ENCODE measurements at regions of chr4 and their contacts with region 1.

Region 1: DNA sequence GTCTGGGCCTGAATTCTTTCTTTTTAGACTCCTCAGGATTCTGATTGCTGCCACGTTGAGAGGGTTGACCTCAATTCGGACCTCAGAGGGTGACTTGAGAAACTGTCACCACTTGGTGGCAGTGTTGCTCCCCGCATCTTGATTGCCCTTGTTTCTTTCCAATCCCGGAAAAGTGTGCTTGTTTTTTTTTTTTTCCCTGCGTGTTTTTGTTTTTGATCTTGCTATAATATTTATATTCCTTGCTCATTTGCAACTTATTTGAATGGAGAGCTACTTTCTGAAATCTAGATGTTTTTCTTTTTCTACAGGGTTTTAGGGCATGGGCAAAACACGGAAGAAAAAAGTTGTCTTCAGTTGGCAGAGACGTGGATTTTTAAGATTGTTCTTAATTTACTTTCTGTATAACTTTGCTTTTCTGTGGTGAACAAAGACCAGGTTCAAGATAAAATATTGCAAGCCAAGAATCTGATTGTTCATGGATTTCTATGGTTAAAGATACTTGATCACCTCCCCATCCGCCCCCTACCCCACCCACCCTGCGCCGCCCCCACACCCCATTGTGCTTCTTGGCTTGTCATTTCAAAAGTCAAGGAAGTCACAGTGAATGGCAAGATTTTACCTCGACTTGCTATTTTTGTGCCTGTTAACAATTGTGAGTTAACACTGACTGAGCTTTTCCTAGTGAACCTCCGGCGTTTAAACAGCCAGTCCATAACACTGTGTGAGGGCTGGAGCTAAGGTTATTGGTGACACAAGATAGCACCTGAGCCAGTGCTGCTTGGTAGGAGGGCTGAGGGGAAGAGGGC is 102.1 kb downstream of the PTTG2 start:
- DNase-seq: no peak
- ATAC-seq: peak; percentile 93
- H3K4me3 ChIP-seq: no peak overlapping the region
- H3K27ac ChIP-seq: peak overlapping the region; percentile 6
- H3K4me1 ChIP-seq: peaks cover 3% of the 10 kb centered on the region; the same call in 1 of the 2 replicates
- H3K27me3 ChIP-seq: no peaks in the 10 kb centered on the region
- CTCF ChIP-seq: peak; percentile 67 to 85 (median 80)
- EP300 ChIP-seq: no peak
- POLR2A ChIP-seq: no peak
- RAD21 ChIP-seq: peak; percentile 95

Region 2: DNA sequence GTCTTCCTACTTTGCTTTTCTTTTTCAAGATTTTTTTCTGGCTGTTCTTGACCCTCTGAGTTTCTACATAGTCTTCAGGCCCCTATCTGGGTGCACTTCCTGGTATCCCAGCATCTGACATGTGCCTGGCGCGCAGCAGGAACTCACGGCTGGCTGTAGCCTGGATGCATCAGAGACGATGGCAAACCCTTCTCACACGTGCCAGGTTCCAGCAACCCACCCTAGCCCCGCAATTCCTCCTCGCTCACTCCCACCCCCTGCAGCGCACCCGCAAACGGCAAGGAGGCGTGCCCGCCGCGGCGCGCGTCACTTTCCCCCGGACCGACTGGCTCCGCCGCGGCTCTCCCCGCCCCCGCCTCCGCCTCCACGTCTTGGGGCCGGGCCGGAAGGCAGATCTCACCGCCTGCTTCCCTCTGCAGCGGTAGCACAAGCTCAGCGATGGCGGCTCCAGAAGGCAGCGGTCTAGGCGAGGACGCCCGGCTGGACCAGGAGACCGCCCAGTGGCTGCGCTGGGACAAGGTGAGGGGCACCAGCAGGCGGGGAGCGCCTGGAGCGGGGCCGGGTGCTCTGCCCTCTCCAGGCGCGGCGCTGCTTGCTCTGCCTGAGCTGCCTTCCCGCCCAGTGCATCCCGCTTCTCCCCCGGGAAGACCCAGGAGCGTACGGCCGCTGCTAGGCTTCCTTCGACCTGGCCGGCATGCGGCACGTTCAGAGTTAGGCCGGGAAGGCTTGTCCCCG is 235.8 kb before region 1 on chr4 and contains the start of gene PGM2:
- CTCF ChIA-PET with region 1: no interaction called
- POLR2A ChIA-PET with region 1: no interaction called
- RAD21 ChIA-PET with region 1: no interaction called
- SMC1A ChIA-PET with region 1: no interaction called
- in situ Hi-C with region 1: no loop called
- intact Hi-C with region 1: no loop called
- DNase-seq: peak; percentile 45
- ATAC-seq: peak; percentile 98
- H3K4me3 ChIP-seq: peak within 1 kb of the TSS; percentile 79
- H3K27ac ChIP-seq: peak within 1 kb of the TSS; percentile 66
- H3K4me1 ChIP-seq: 0 out of 2 replicates have a peak, but pooled peaks cover 5% of the 10 kb centered on the region
- H3K27me3 ChIP-seq: no peaks in the 10 kb centered on the region
- CTCF ChIP-seq: 0 out of 6 replicates have a peak, but pooled peaks of 1 of the 3 experiments have one; percentile 7
- EP300 ChIP-seq: no peak
- POLR2A ChIP-seq: peak; percentile 100
- RAD21 ChIP-seq: 0 out of 2 replicates have a peak, but pooled peaks have one; percentile 5
- polyA plus RNA-seq, gene PGM2: 11.9 to 15.1 TPM

Region 3: DNA sequence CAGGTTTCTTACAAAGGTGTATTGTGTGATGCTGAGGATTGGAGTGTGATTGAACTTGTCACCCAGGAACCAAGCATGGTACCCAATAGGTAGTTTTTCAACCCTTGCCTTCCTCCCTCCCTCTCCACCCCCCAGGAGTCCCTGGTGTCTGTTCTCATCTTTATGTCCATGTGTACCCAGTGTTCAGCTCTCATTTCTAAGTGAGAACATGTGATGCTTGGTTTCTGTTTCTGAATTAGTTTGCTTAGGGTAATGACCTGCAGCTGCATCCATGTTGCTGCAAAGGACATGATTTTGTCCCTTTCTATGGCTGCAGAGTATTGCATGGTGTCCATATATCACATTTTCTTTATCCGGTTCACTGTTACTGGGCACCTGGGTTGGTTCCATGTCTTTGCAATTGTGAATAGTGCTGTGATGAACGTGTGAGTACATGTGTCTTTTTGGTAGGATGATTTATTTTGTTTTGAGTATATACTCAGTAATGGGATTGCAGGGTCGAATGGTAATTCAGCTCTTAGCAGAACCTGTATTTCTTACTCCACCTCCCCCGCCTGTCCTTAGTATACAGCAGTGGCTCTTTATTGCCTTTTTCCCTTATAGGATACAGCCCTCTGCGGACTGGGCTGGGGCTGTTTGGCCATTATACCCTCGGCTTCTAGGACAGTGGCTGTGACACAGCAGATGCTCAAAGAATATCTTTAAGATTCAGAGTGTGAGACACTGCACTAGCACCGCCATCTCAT is 43.4 kb after region 1 on chr4:
- CTCF ChIA-PET with region 1: no interaction called
- POLR2A ChIA-PET with region 1: no interaction called
- RAD21 ChIA-PET with region 1: no interaction called
- SMC1A ChIA-PET with region 1: no interaction called
- in situ Hi-C with region 1: no loop called
- intact Hi-C with region 1: no loop called
- DNase-seq: peak; percentile 45
- ATAC-seq: peak; percentile 92
- H3K4me3 ChIP-seq: no peak overlapping the region
- H3K27ac ChIP-seq: peak overlapping the region; percentile 30
- H3K4me1 ChIP-seq: peaks cover 15% of the 10 kb centered on the region
- H3K27me3 ChIP-seq: no peaks in the 10 kb centered on the region
- CTCF ChIP-seq: no peak
- EP300 ChIP-seq: peak in 1 of 2 experiments; percentile 23; a peak in 1 of 4 replicates
- POLR2A ChIP-seq: no peak
- RAD21 ChIP-seq: peak; percentile 19; the same call in 1 of the 2 replicates

Region 4: DNA sequence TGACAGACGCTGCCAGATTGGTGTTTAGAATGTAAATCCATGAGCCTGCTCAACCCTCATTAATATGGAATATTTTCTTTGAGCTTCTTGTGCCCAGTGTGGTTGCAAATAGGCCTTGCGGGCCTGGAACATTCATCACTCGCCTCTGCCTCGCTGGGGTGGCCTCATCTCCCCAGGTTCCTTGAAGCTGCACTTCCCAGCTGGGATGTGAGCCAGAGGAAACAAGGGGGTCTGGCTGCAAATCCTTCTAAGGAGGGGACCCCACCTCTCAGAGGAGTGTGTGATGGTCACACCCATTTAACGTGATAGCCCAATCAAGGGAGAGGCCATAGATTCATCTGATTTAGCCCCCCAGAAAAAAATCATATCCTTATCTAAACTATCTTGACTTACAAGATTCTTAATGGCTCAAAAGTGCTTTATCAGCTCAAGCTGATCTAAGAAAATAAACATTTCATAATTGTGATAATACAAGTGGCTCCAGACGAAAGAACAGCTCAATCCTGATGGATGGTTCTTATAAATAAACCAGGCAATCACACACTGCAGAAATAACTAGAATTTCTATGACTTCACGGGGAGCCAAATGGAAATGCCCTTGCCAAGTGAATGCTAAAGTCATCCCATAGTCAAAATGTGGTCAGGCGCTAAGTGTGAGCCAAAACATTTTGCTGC is 87.8 kb after region 1 on chr4:
- CTCF ChIA-PET with region 1: no interaction called
- POLR2A ChIA-PET with region 1: no interaction called
- RAD21 ChIA-PET with region 1: no interaction called
- SMC1A ChIA-PET with region 1: no interaction called
- in situ Hi-C with region 1: no loop called
- intact Hi-C with region 1: no loop called
- DNase-seq: no peak
- ATAC-seq: no peak
- H3K4me3 ChIP-seq: no peak overlapping the region
- H3K27ac ChIP-seq: no peak overlapping the region
- H3K4me1 ChIP-seq: no peaks in the 10 kb centered on the region; the same call in 1 of the 2 replicates
- H3K27me3 ChIP-seq: no peaks in the 10 kb centered on the region
- CTCF ChIP-seq: no peak
- EP300 ChIP-seq: no peak
- POLR2A ChIP-seq: no peak
- RAD21 ChIP-seq: no peak

Region 5: DNA sequence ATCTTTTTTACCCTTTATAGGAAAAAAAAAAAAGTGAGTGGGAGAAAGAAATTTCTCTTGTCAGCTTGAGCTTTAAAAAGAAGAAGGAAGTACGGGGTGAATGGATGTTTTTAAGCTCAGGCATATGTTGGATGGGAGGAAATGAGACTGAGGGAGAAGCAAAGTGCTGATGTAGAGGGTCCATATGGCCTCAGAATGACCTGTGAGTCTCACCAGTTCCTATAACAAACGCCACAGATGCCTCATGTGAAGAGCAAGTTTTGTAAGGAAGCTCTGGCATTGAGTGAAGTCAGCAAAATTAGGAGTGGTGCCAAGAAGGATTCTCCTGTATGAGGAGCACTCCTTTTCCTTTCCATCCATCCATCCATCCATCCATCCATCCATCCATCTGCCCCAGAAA is 112.5 kb after region 1 on chr4:
- CTCF ChIA-PET with region 1: interaction called, 202 read pairs
- POLR2A ChIA-PET with region 1: interaction called, 3 read pairs
- RAD21 ChIA-PET with region 1: interaction called, 173 read pairs
- SMC1A ChIA-PET with region 1: interaction called, 40 read pairs
- in situ Hi-C with region 1: no loop called
- intact Hi-C with region 1: loop called (anchors 1 kb)
- DNase-seq: no peak
- ATAC-seq: no peak
- H3K4me3 ChIP-seq: no peak overlapping the region
- H3K27ac ChIP-seq: no peak overlapping the region
- H3K4me1 ChIP-seq: peaks cover 36% of the 10 kb centered on the region
- H3K27me3 ChIP-seq: no peaks in the 10 kb centered on the region
- CTCF ChIP-seq: no peak
- EP300 ChIP-seq: no peak
- POLR2A ChIP-seq: no peak
- RAD21 ChIP-seq: no peak

Region 6: DNA sequence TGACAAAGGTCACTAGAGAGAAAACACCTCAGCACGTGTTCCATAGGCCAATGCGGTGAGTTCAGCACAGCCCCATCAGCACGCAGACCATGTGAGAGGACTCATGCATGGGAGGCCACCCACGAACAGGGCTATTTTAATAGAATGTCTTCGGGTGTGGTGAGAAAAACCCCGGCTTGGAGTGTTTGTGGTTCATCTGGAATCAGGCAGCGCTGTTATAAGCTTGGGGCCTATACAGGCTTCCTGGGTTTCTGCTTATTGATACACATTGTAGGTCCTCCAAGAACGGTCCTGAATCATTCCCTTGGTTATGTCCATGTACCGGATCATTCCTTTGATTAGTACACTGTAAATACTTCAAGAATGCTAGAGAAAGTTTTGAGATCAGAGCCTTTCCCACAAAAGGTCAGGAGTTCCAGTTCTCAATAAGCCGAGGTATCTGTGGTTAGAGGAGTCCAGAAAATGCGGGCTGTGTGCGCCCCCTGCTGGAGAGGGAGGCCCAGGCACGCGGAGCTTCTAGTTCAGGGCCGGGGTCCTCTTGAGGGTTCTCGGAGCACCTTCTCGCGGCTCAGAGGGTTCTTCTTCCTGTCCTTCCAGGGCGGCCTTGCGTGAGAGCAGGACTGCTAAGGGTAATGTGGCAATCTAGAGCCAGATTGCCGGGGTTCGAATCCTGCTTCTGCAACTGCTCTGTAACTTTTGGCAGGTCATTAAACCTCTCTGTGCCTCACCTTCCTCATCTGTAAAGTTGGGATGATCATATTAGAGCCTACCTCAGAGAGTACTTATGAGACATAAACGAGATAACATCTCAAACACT is 668.7 kb after region 1 on chr4:
- CTCF ChIA-PET with region 1: interaction called, 3 read pairs
- POLR2A ChIA-PET with region 1: no interaction called
- RAD21 ChIA-PET with region 1: interaction called, 4 read pairs
- SMC1A ChIA-PET with region 1: no interaction called
- in situ Hi-C with region 1: no loop called
- intact Hi-C with region 1: loop called (anchors 1 kb)
- DNase-seq: peak; percentile 87
- ATAC-seq: peak; percentile 97
- H3K4me3 ChIP-seq: no peak overlapping the region
- H3K27ac ChIP-seq: peak overlapping the region; percentile 57
- H3K4me1 ChIP-seq: peaks cover 16% of the 10 kb centered on the region
- H3K27me3 ChIP-seq: no peaks in the 10 kb centered on the region; a peak in 1 of 4 replicates
- CTCF ChIP-seq: peak; percentile 69 to 96 (median 89)
- EP300 ChIP-seq: peak; percentile 75 to 91; a peak in 3 of 4 replicates
- POLR2A ChIP-seq: no peak
- RAD21 ChIP-seq: peak; percentile 97

Region 7: DNA sequence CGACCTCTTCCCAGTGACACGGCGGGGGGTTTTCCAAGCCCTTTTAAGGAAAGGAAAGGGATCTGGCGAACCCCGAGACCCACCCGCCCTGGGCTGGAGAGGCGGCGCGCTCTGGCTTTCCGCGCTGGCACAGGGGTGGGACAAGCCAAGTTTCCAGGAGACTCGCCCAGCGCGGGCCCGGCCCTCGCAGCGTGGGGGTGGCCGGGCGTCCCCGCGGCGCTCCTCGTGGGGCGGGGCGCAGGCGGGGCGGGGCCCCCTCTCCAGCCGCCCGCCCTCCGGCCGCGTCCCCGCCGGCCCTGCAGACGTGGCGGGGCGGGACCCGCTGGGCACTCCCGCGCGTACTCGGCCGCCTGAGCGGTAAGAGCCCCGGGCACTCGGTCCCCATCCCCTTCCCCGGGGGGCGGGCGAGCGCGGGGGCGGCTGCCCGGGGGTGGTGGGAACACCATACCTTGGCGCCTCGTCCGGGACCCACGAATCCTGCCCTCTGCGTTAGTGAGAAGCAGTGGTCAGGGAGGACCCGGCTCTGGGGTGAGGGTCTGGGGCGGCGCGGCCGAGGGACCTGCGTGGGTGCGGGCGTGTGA is 805.3 kb after region 1 on chr4 and contains the start of gene FAM114A1:
- CTCF ChIA-PET with region 1: no interaction called
- POLR2A ChIA-PET with region 1: no interaction called
- RAD21 ChIA-PET with region 1: no interaction called
- SMC1A ChIA-PET with region 1: no interaction called
- in situ Hi-C with region 1: loop called (anchors 10 kb)
- intact Hi-C with region 1: no loop called
- DNase-seq: no peak
- ATAC-seq: peak; percentile 99
- H3K4me3 ChIP-seq: peak within 1 kb of the TSS; percentile 82
- H3K27ac ChIP-seq: no peak within 1 kb of the TSS; the same call in 1 of the 2 replicates
- H3K4me1 ChIP-seq: peaks cover 7% of the 10 kb centered on the region
- H3K27me3 ChIP-seq: no peaks in the 10 kb centered on the region
- CTCF ChIP-seq: no peak
- EP300 ChIP-seq: no peak
- POLR2A ChIP-seq: peak; percentile 80
- RAD21 ChIP-seq: no peak
- polyA plus RNA-seq, gene FAM114A1: 1.3 to 1.9 TPM